Ascending aorta (tissue), 2 donors: ENCODE measurements at regions of chr20 and their contacts with region 1.

Region 1: DNA sequence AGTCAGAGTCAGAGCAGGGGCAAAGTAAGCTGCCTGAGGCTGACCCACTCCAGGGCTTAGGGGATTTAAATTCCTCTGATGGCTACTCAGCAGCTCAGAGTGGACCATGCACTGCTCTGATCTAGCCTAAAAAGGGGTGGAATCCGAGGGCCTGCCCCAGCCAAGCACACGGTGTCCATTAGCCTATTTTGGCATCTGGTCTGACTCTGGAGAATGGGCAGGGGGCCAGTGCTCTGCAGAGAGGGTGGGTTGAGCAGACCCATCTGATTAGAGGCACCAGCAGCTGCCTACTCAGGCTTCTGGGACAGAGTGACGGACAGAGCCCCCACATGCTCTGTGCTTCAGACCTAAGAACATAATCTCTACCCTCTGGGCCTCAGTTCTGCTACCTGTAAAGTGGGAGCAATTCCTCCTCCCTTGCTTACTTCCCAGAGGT is 25.9 kb upstream of the TGM2 start:
- DNase-seq: peak; percentile 42 to 82
- H3K4me3 ChIP-seq: no peak overlapping the region
- H3K27ac ChIP-seq: peak overlapping the region; percentile 50 to 65
- H3K4me1 ChIP-seq: peaks cover 5 to 8% of the 10 kb centered on the region in 2 donors
- H3K27me3 ChIP-seq: no peaks in the 10 kb centered on the region
- CTCF ChIP-seq: no peak

Region 2: GRCh38 chr20:38210741-38211140 is 19.8 kb after region 1 on chr20:
- intact Hi-C with region 1: loop called (anchors 2 kb)
- DNase-seq: no peak
- H3K4me3 ChIP-seq: no peak overlapping the region
- H3K27ac ChIP-seq: peak overlapping the region in 1 of 2 donors; percentile 65
- H3K4me1 ChIP-seq: peaks cover 18 to 24% of the 10 kb centered on the region in 2 donors
- H3K27me3 ChIP-seq: no peaks in the 10 kb centered on the region
- CTCF ChIP-seq: no peak

Region 3: GRCh38 chr20:38229376-38230252 is 38.7 kb after region 1 on chr20:
- intact Hi-C with region 1: no loop called
- DNase-seq: no peak
- H3K4me3 ChIP-seq: no peak overlapping the region
- H3K27ac ChIP-seq: no peak overlapping the region
- H3K4me1 ChIP-seq: no peaks in the 10 kb centered on the region
- H3K27me3 ChIP-seq: no peaks in the 10 kb centered on the region
- CTCF ChIP-seq: peak; percentile 48 to 67 (median 62)

Region 4: DNA sequence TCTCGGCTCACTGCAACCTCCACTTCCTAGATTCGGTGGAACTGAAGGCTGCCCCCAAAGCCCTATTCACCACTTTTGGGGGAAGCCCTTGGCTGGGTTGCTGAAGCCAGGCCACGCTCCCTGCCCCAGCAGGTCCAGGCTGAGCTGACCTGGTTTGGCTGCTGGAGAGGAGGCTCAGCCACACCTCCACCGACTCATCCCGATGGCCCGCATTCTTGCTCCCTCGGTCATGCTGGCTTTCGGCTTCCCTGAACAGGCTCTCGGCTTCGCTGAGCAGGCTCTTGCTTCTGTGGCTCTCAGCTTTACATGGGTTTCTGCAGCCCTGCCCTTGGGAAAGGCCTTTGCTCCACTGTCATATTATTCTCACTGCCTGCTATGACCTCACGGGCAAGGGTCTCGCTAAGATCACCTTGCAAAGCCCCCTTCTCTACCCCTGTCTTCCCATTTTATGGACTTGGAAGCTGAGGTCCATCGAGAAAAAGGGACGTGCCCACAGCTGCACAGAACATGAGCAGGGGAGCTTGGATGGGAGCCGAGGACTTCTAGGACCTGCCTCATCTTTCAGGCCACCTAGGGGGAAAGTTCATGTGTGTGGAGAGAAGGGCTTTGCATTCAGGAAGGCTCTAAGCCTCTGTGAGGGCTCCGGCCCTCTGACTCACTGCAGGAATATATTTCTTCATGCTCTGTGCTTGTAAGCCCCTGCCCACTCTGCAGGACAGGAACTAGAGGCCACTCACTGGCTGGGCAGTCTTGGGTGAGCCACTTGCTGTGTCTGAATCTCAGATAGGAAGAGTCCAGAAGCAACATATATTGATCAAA is 426.3 kb after region 1 on chr20:
- intact Hi-C with region 1: no loop called
- DNase-seq: no peak
- H3K4me3 ChIP-seq: no peak overlapping the region
- H3K27ac ChIP-seq: no peak overlapping the region
- H3K4me1 ChIP-seq: no peaks in the 10 kb centered on the region
- H3K27me3 ChIP-seq: no peaks in the 10 kb centered on the region
- CTCF ChIP-seq: no peak